ENCODE measurements at regions of chr6 and their contacts with region 1.

Region 1: GRCh38 chr6:149717588-149718458 is at the start of gene LATS1:
- DNase-seq: peak; percentile 98
- H3K4me3 Mint-ChIP-seq: peak within 1 kb of the TSS; percentile 98
- H3K27ac Mint-ChIP-seq: peak within 1 kb of the TSS; percentile 98
- H3K4me1 Mint-ChIP-seq: peaks cover 32% of the 10 kb centered on the region
- H3K27me3 Mint-ChIP-seq: no peaks in the 10 kb centered on the region
- total RNA-seq, gene LATS1: 31.8 and 33.7 TPM in 2 replicates

Region 2: GRCh38 chr6:149648148-149649145 is 69.4 kb before region 1 on chr6 and contains the start of gene KATNA1:
- intact Hi-C with region 1: loop called (anchors 2 kb)
- DNase-seq: peak; percentile 97
- H3K4me3 Mint-ChIP-seq: peak within 1 kb of the TSS; percentile 85
- H3K27ac Mint-ChIP-seq: peak within 1 kb of the TSS; percentile 87
- H3K4me1 Mint-ChIP-seq: peaks cover 23% of the 10 kb centered on the region
- H3K27me3 Mint-ChIP-seq: no peaks in the 10 kb centered on the region
- total RNA-seq, gene KATNA1: 18.9 and 23.0 TPM in 2 replicates

Region 3: DNA sequence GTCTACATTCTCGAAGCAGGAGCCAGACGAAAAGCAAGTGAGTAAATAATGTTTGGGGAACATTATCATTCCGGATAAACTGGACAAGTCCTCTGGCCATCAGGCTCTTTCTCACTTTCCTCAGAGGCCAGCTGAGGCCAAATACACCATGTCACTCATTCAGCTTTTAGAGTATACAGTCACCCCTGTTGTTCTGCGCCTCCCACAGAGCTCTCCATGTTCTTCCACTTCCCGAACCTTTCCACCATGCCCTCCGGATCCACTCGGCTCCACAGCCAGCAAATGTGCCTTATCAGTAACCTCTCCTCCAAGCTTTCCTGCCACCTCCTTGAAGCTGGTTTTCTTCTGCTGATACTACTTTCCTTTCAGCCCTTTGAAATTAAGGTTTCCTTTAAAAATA is 31.6 kb before region 1 on chr6:
- intact Hi-C with region 1: loop called (anchors 2 kb)
- DNase-seq: no peak
- H3K4me3 Mint-ChIP-seq: no peak overlapping the region
- H3K27ac Mint-ChIP-seq: peak overlapping the region; percentile 56
- H3K4me1 Mint-ChIP-seq: peaks cover 23% of the 10 kb centered on the region
- H3K27me3 Mint-ChIP-seq: no peaks in the 10 kb centered on the region

Region 4: DNA sequence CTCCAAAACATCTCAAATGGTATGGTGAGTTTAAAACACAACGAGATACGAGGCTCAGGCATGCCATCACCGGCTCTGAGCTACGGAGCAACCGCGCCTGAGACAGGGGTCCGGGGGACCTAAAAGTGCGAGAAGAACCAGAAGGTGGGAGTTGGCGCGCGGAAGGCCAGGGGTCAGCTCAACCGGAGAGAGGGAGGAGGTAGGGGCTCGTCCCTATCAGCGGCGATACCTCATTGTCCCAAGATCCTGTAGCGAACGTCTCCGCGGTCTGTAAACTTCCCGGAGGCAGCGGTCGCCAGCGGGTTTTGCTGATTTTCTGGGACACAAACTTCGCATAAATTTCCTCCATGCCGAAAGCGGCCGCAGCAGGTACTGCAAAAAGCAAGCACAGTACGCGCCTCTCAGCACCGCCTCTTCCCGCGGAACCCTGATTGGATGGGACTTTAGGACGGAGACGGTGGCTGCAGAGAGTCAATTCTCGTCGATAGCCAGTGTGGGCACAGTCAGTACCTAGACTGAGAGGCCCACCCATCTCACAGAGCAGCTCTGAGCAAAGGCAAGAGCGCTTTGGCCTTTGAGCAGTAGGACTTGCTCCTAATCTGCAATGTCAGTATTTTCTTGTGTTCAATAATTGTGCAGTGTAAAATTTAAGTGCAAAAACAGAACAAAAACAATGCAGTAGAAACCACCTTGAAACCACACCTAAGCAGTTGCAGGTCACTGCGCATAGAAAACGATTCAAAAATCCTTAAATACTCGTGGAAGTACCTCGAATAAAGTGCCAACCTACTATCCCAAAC is 28.5 kb after region 1 on chr6 and contains the start of gene NUP43:
- intact Hi-C with region 1: loop called (anchors 1 kb)
- DNase-seq: peak; percentile 98
- H3K4me3 Mint-ChIP-seq: peak within 1 kb of the TSS; percentile 99
- H3K27ac Mint-ChIP-seq: peak within 1 kb of the TSS; percentile 94
- H3K4me1 Mint-ChIP-seq: peaks cover 20% of the 10 kb centered on the region
- H3K27me3 Mint-ChIP-seq: no peaks in the 10 kb centered on the region
- total RNA-seq, gene NUP43: 78.9 and 93.7 TPM in 2 replicates

Measured in activated CD4-positive, alpha-beta T cell treated with anti-CD3 and anti-CD28 coated beads, Interleukin-2, amount 10 ng/mL, durations not matched to agents 24 days and 14 days (primary cell).